ENCODE measurements at regions of chr7 and their contacts with region 1.

Region 1: DNA sequence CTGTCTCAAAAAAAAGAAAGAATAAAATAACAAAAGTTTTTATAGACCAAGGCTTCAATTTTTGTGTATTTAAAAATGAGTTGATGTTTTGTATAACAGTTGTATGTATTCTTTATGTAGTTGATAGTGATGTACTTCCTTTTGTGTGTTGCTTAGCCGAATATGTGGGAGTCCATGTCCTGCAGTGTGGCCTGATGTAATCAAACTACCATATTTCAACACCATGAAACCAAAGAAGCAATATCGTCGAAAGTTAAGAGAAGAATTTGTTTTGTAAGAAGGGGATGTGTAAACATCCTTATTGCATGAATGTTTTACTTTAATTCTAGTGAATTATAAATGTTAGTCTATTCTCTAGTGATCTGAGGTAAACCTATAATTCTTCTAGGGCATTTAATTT is 56.6 kb downstream of the MPLKIP start:
- DNase-seq: no peak

Region 2: GRCh38 chr7:39971924-39972323 is 105.9 kb before region 1 on chr7:
- intact Hi-C with region 1: no loop called
- DNase-seq: no peak

Region 3: DNA sequence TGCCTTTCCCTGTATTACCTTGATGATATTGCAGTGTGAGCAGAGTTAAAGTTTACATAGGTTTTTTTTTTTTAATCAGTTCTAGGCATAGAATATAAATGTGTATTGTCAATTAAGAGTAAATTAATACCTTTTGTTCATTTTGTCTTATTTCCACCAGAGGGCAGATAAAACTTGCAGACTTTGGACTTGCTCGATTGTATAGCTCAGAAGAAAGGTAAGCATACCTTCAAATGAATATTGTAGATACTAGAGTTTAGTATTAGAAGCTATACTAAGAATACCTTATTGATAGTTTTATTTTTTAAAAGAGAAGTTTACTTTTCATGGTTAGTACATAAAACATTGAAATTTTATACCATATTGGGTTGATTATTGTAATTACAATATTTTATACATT is 30.2 kb before region 1 on chr7:
- intact Hi-C with region 1: no loop called
- DNase-seq: no peak

Region 4: DNA sequence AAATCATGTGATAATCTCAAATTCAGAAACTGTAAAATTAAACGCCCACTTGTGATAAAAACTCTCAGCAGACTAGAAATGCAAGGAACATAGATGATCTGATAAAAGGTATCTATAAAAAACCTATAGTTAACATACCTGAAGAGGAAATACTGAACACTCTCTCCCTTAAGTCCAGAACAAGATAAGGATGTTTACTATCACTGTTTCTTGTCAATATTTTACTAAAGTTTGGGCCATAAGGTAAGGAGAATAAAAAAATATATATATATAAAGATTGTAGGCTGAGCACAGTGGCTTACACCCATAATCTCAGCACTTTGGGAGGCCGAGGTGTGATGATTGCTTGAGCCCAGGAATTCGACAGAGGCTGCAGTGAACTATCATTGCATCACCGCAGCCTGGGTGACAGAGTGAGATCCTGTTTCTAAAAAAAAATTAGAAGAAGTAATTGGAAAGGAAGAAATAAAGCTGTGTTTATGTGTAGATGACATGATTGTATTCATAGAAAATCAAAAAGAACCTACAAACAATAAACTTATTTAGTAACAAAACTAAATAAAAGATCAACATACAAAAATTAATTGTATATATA is 28.1 kb after region 1 on chr7:
- intact Hi-C with region 1: loop called in 1 of 2 experiments (anchors 1 kb)
- DNase-seq: no peak

Measured in posterior vena cava (tissue), 2 donors.